OCI-LY7 (cell line): ENCODE measurements at regions of chr16 and their contacts with region 1.

Region 1: GRCh38 chr16:71961066-71962039 is 38.8 kb downstream of the PKD1L3 start:
- DNase-seq: peak; percentile 90
- H3K4me3 ChIP-seq: no peak overlapping the region
- H3K27ac ChIP-seq: peak overlapping the region; percentile 58
- H3K4me1 ChIP-seq: peaks cover 57% of the 10 kb centered on the region
- CTCF ChIP-seq: peak; percentile 96

Region 2: GRCh38 chr16:71645453-71645852 is 315.9 kb before region 1 on chr16:
- CTCF ChIA-PET with region 1: no interaction called
- POLR2A ChIA-PET with region 1: no interaction called
- intact Hi-C with region 1: loop called (anchors 1 kb)
- DNase-seq: peak; percentile 52
- H3K4me3 ChIP-seq: no peak overlapping the region
- H3K27ac ChIP-seq: no peak overlapping the region
- H3K4me1 ChIP-seq: no peaks in the 10 kb centered on the region
- CTCF ChIP-seq: peak; percentile 82

Region 3: GRCh38 chr16:71746442-71747046 is 214.8 kb before region 1 on chr16:
- CTCF ChIA-PET with region 1: no interaction called
- POLR2A ChIA-PET with region 1: interaction called, 3 read pairs
- intact Hi-C with region 1: loop called (anchors 5 kb)
- DNase-seq: peak; percentile 64
- H3K4me3 ChIP-seq: no peak overlapping the region
- H3K27ac ChIP-seq: no peak overlapping the region
- H3K4me1 ChIP-seq: no peaks in the 10 kb centered on the region
- CTCF ChIP-seq: peak; percentile 96

Region 4: DNA sequence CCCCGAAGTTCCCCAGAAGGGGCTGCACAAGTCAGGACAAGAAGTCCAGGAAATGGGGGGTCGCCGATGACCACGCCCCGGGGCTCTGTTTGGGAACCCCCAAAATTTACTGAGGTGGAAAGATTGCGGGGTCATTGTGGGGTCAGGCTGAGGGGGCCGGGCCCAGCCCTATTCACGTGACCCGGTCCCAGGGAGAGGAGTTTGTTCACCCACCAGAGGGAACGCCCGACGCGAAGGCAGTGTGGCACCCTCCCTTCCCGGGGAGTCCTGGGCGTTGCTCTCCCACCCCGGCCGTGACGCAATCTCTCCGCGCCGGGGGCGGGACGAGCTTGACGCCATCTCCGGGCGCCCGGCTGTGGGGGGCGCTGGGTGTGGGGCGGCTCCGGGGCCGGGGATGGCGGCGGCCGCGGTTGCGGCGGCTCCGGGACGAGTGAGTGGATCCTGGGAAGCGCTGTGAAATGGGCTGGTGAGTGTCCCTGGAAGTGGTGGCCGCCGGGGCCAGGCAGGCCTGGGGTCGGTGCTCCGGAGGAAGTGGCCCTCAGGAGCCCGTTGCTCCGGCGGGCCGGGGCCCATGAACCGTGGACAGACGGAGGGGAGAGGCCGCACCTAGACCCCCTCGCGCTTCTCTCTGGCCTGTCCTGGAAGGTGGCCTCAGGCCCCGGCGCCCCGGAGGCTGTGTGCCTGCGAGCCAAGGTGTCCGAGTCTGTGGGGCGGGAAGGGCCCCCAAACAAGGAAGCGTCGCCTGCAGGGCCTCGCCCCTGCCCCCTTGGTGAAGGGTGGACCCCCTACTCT is 115.5 kb before region 1 on chr16 and contains the start of gene ATXN1L:
- CTCF ChIA-PET with region 1: no interaction called
- POLR2A ChIA-PET with region 1: interaction called, 3 read pairs
- intact Hi-C with region 1: loop called (anchors 2 kb)
- DNase-seq: peak; percentile 94
- H3K4me3 ChIP-seq: peak within 1 kb of the TSS; percentile 89
- H3K27ac ChIP-seq: peak within 1 kb of the TSS; percentile 18
- H3K4me1 ChIP-seq: peaks cover 32% of the 10 kb centered on the region
- CTCF ChIP-seq: no peak
- total RNA-seq, gene ATXN1L: 12.5 and 12.8 TPM in 2 replicates

Region 5: GRCh38 chr16:71883849-71884638 is 77.3 kb before region 1 on chr16 and contains the start of gene ZNF821:
- CTCF ChIA-PET with region 1: interaction called, 6 read pairs
- POLR2A ChIA-PET with region 1: interaction called, 12 read pairs
- intact Hi-C with region 1: loop called (anchors 1 kb)
- DNase-seq: peak; percentile 91
- H3K4me3 ChIP-seq: peak within 1 kb of the TSS; percentile 95
- H3K27ac ChIP-seq: peak within 1 kb of the TSS; percentile 63
- H3K4me1 ChIP-seq: peaks cover 44% of the 10 kb centered on the region
- CTCF ChIP-seq: peak; percentile 77
- total RNA-seq, gene ZNF821: 10.5 and 14.6 TPM in 2 replicates

Region 6: DNA sequence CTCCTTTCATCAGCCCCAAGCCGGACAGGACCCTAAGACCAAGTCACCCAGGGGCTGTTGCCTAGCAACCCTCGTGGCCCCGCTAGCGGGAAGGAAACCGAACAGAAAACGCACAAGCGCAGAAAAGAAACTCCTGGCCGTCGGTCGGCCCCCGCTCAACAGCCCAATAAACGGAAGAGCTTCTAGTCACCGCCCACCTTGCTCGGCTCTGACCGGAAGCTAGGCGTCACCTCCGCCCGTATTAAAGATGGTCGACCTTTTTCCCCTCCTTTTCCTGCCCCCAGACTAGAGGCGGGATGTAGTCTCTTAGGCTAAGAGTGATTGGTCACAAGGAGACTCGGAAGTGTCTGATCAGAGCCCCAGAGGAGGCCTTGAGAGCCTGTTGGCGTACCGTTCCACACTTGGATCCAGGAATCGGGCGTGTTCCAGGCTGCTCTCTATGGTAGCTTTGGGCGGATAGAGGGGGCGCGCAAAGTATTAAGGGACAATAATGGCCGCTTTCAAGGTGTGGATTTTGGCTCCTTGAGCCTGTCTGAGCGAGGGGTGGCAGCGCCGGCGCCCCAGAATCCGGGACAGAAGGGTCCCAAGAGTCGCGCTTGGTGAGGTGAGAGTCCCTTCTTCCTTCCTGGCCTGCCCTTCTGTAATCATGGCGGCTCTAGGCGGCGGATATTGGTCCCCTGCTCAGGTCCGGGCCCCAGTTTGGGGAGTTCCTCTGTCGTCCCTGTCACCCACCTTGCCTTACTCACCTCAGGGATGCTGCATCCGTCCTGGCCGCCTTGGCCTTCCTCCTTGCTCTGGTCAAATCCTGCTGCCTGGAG is 132.3 kb after region 1 on chr16 and contains the starts of genes DHX38 and TXNL4B:
- CTCF ChIA-PET with region 1: no interaction called
- POLR2A ChIA-PET with region 1: interaction called, 5 read pairs
- intact Hi-C with region 1: loop called (anchors 5 kb)
- DNase-seq: peak; percentile 98
- H3K4me3 ChIP-seq: peak within 1 kb of the TSS; percentile 96
- H3K27ac ChIP-seq: peak within 1 kb of the TSS; percentile 64
- H3K4me1 ChIP-seq: peaks cover 29% of the 10 kb centered on the region
- CTCF ChIP-seq: no peak
- total RNA-seq, gene DHX38: 56.6 and 71.9 TPM in 2 replicates
- total RNA-seq, gene TXNL4B: 7.9 and 9.5 TPM in 2 replicates